H1 (cell line): ENCODE measurements at regions of chr12 and their contacts with region 1.

Region 1: DNA sequence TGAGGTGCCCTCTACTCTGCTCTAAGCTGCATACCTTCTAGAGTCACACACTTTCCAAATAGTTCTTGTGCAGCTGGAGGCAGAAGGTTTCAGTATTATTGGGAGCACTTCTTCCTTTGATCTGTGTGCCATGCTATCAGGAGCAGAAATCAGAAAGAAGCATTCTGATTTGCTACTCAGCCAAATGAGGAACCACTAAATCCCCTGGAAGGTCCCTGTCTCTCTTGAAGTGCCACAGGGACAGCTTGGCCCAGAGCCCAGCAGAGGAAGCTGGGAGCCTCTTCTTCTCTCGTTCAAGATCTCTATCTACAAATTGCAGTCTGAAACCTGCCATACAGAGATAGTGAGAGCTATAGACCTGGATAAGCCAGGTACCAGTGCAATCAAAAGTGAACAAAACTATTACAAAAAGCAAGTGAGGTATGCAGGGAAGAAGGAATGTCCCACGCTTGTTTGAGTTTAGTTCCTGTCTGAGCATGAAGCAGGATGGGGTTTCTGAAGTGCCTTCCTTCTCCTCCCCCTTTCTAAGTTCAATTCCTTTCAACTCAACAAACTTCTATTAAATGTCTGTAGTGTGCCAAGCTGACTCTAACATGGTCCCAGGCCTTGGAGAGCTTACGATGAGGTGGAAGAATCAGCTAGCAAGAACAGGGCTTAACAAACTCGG is 100.9 kb upstream of the PARP11 start:
- DNase-seq: peak in 1 of 2 experiments; percentile 24
- H3K4me3 ChIP-seq: no peak overlapping the region
- H3K27ac ChIP-seq: no peak overlapping the region
- H3K4me1 ChIP-seq: no peaks in the 10 kb centered on the region
- H3K27me3 ChIP-seq: no peaks in the 10 kb centered on the region
- CTCF ChIP-seq: no peak
- EP300 ChIP-seq: no peak
- POLR2A ChIP-seq: no peak
- RAD21 ChIP-seq: no peak

Region 2: DNA sequence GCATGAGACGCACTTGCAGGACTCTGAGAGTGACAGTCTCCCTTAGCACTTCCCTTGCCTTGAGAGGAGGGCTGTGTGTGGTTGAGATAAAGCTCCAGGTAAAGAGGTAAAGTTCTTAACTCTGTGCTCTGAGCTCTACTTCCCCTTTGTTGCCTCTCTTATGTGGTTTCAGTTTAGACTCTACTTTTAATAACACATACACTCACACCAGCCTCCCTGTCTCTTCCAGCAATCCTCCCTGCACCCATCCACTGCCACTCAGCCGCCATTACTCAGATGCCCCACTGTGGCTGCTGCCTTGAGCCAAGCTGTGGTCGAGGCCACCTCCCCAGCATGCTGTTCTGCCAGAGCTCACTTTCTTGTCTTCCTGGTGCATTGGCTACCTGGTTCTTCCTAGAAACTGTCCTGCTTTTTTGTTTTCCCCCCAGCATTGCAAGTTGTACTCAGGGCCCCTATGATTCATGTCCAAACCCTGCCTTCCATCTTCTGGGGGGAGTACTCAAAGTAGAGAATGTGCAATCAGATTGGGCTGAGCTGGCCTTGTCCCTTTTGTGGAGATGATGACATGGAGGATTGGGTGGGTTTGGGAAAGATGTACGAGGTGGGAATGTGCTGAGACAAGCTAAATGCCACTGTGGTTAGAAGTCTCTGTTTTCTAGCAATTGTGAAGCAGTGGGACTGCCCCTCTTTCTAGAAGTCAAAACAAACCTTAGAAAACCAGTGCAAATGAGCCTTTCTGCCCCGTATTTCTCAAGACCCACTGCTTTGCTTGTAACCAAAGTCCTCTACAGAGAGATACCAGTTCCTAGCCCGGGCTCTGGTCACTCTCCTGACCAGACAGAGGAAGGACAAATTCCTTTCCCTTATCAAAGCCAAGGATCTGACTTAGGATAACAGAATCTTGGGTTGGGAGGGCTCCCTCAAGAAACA is 14.7 kb after region 1 on chr12:
- CTCF ChIA-PET with region 1: interaction called, 10 read pairs
- POLR2A ChIA-PET with region 1: interaction called, 3 read pairs
- DNase-seq: no peak
- H3K4me3 ChIP-seq: no peak overlapping the region
- H3K27ac ChIP-seq: no peak overlapping the region
- H3K4me1 ChIP-seq: no peaks in the 10 kb centered on the region; a peak in 1 of 7 replicates
- H3K27me3 ChIP-seq: no peaks in the 10 kb centered on the region
- CTCF ChIP-seq: no peak
- EP300 ChIP-seq: no peak
- POLR2A ChIP-seq: no peak
- RAD21 ChIP-seq: no peak